GM12878 (cell line): ENCODE measurements at regions of chr2 and their contacts with region 1.

Region 1: GRCh38 chr2:225002039-225002655 is 40.1 kb downstream of the DOCK10 start:
- DNase-seq: peak; percentile 60
- ATAC-seq: peak; percentile 85
- H3K4me3 ChIP-seq: no peak overlapping the region
- H3K27ac ChIP-seq: no peak overlapping the region
- H3K4me1 ChIP-seq: peaks cover 13% of the 10 kb centered on the region; the same call in 1 of the 2 replicates
- H3K27me3 ChIP-seq: no peaks in the 10 kb centered on the region
- CTCF ChIP-seq: peak; percentile 76 to 83 (median 77)
- EP300 ChIP-seq: no peak
- POLR2A ChIP-seq: no peak
- RAD21 ChIP-seq: peak; percentile 95

Region 2: GRCh38 chr2:224650815-224651439 is 351.2 kb before region 1 on chr2:
- CTCF ChIA-PET with region 1: no interaction called
- POLR2A ChIA-PET with region 1: no interaction called
- RAD21 ChIA-PET with region 1: no interaction called
- SMC1A ChIA-PET with region 1: no interaction called
- in situ Hi-C with region 1: no loop called
- intact Hi-C with region 1: no loop called
- DNase-seq: no peak
- ATAC-seq: peak; percentile 89
- H3K4me3 ChIP-seq: no peak overlapping the region
- H3K27ac ChIP-seq: no peak overlapping the region
- H3K4me1 ChIP-seq: no peaks in the 10 kb centered on the region
- H3K27me3 ChIP-seq: no peaks in the 10 kb centered on the region
- CTCF ChIP-seq: peak; percentile 71 to 73 (median 72)
- EP300 ChIP-seq: no peak
- POLR2A ChIP-seq: no peak
- RAD21 ChIP-seq: peak; percentile 93

Region 3: GRCh38 chr2:224875841-224876240 is 126.3 kb before region 1 on chr2:
- CTCF ChIA-PET with region 1: interaction called, 14 read pairs
- POLR2A ChIA-PET with region 1: no interaction called
- RAD21 ChIA-PET with region 1: interaction called, 5 read pairs
- SMC1A ChIA-PET with region 1: interaction called, 9 read pairs
- in situ Hi-C with region 1: no loop called
- intact Hi-C with region 1: no loop called
- DNase-seq: no peak
- ATAC-seq: peak; percentile 91
- H3K4me3 ChIP-seq: no peak overlapping the region
- H3K27ac ChIP-seq: peak overlapping the region; percentile 29; the same call in 1 of the 2 replicates
- H3K4me1 ChIP-seq: peaks cover 17% of the 10 kb centered on the region
- H3K27me3 ChIP-seq: no peaks in the 10 kb centered on the region
- CTCF ChIP-seq: no peak
- EP300 ChIP-seq: no peak
- POLR2A ChIP-seq: no peak
- RAD21 ChIP-seq: no peak

Region 4: DNA sequence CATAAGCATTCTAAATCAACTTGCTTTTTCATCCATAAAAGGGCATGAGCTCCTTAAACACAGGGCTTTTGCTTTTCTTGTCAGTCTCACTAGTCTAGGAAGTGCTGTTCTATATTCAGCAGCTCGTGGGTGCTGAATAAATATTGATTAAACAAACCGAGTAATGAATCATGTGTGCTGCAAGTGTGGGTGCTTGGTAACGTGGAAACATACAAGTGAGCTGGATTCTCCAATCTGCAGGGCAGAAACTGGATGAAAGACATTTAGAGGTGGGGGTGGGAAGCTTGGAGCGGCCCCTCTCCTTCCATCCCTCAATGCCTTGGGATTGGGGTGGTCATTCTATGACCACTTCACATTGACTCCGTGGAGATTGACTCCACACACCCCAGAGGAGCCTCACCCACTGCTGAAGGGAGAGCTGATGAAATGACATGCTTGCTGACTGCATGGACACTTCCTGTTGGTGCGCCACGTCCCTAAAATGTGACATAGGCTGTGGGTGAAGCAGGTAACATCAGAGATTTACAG is 74.4 kb before region 1 on chr2:
- CTCF ChIA-PET with region 1: interaction called, 118 read pairs
- POLR2A ChIA-PET with region 1: interaction called, 3 read pairs
- RAD21 ChIA-PET with region 1: interaction called, 13 read pairs
- SMC1A ChIA-PET with region 1: interaction called, 23 read pairs
- in situ Hi-C with region 1: loop called (anchors 5 kb)
- intact Hi-C with region 1: loop called (anchors 1 kb)
- DNase-seq: no peak
- ATAC-seq: no peak
- H3K4me3 ChIP-seq: no peak overlapping the region
- H3K27ac ChIP-seq: peak overlapping the region; percentile 71
- H3K4me1 ChIP-seq: peaks cover 62% of the 10 kb centered on the region
- H3K27me3 ChIP-seq: no peaks in the 10 kb centered on the region
- CTCF ChIP-seq: no peak
- EP300 ChIP-seq: no peak
- POLR2A ChIP-seq: no peak
- RAD21 ChIP-seq: no peak

Region 5: DNA sequence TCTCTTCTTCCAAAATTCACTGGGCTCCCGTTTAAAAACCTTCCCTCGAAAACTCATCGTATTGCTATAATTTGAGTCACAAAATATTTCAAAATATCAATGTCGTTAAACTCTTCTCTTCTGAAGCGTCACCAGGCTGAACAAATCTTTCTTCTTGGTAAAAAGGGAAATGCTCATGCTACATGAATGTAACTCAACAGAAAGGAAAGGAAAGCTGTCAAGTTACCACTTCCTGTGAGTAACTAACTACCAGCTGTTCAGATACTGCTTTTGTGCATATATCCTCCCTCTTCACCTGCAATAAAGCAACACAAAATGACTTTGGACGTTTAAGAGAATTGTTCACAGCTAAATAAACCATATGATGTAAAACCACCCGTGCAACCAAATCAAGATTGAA is 55.3 kb before region 1 on chr2:
- CTCF ChIA-PET with region 1: interaction called, 35 read pairs
- POLR2A ChIA-PET with region 1: interaction called, 4 read pairs
- RAD21 ChIA-PET with region 1: interaction called, 7 read pairs
- SMC1A ChIA-PET with region 1: interaction called, 17 read pairs
- in situ Hi-C with region 1: no loop called
- intact Hi-C with region 1: no loop called
- DNase-seq: no peak
- ATAC-seq: peak; percentile 54
- H3K4me3 ChIP-seq: peak overlapping the region; percentile 78
- H3K27ac ChIP-seq: peak overlapping the region; percentile 86
- H3K4me1 ChIP-seq: peaks cover 49% of the 10 kb centered on the region
- H3K27me3 ChIP-seq: no peaks in the 10 kb centered on the region
- CTCF ChIP-seq: no peak
- EP300 ChIP-seq: peak in 1 of 2 experiments; percentile 52; a peak in 1 of 4 replicates
- POLR2A ChIP-seq: no peak
- RAD21 ChIP-seq: no peak

Region 6: GRCh38 chr2:224990710-224991109 is 11.4 kb before region 1 on chr2:
- CTCF ChIA-PET with region 1: interaction called, 12 read pairs
- POLR2A ChIA-PET with region 1: no interaction called
- RAD21 ChIA-PET with region 1: interaction called, 7 read pairs
- SMC1A ChIA-PET with region 1: interaction called, 11 read pairs
- in situ Hi-C with region 1: no loop called
- intact Hi-C with region 1: no loop called
- DNase-seq: no peak
- ATAC-seq: no peak
- H3K4me3 ChIP-seq: no peak overlapping the region
- H3K27ac ChIP-seq: no peak overlapping the region
- H3K4me1 ChIP-seq: no peaks in the 10 kb centered on the region
- H3K27me3 ChIP-seq: no peaks in the 10 kb centered on the region
- CTCF ChIP-seq: no peak
- EP300 ChIP-seq: no peak
- POLR2A ChIP-seq: no peak
- RAD21 ChIP-seq: no peak

Region 7: GRCh38 chr2:225660262-225661131 is 658.4 kb after region 1 on chr2:
- CTCF ChIA-PET with region 1: interaction called, 4 read pairs
- POLR2A ChIA-PET with region 1: no interaction called
- RAD21 ChIA-PET with region 1: interaction called, 4 read pairs
- SMC1A ChIA-PET with region 1: interaction called, 5 read pairs
- in situ Hi-C with region 1: loop called (anchors 10 kb)
- intact Hi-C with region 1: loop called (anchors 1 kb)
- DNase-seq: peak; percentile 9
- ATAC-seq: peak; percentile 95
- H3K4me3 ChIP-seq: no peak overlapping the region
- H3K27ac ChIP-seq: no peak overlapping the region
- H3K4me1 ChIP-seq: no peaks in the 10 kb centered on the region
- H3K27me3 ChIP-seq: no peaks in the 10 kb centered on the region
- CTCF ChIP-seq: peak; percentile 85 to 90 (median 86)
- EP300 ChIP-seq: no peak
- POLR2A ChIP-seq: no peak
- RAD21 ChIP-seq: peak; percentile 94